ENCODE measurements at regions of chr10 and their contacts with region 1.

Region 1: DNA sequence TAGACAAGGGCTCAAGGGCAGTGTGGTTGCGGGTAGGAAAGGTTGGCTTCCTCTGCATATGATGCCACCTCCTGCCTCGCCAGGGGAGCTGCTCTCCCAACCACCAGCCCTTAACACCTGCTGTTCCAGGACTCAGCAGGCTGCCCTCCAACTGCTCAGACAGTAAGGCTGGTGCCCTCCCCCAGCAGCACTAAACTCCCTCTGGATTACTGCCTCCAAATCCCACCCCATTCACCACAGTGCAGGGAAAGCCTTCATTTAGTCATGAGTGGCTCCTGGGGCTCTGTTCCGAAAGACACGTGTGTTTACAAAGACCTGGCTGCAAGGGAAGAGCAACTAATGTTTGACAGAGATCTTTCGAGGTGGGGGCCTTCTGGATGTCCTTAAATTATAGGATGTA is 437.2 kb upstream of the MKI67 start:
- DNase-seq: no peak
- ATAC-seq: no peak
- H3K4me3 ChIP-seq: no peak overlapping the region
- H3K4me3 Mint-ChIP-seq: no peak overlapping the region
- H3K27ac ChIP-seq: no peak overlapping the region
- H3K27ac Mint-ChIP-seq: no peak overlapping the region
- H3K4me1 ChIP-seq: no peaks in the 10 kb centered on the region
- H3K4me1 Mint-ChIP-seq: no peaks in the 10 kb centered on the region
- H3K27me3 ChIP-seq: no peaks in the 10 kb centered on the region
- H3K27me3 Mint-ChIP-seq: no peaks in the 10 kb centered on the region
- CTCF ChIP-seq: no peak

Region 2: GRCh38 chr10:128419466-128420019 is 143.8 kb before region 1 on chr10:
- CTCF ChIA-PET with region 1: no interaction called
- POLR2A ChIA-PET with region 1: no interaction called
- intact Hi-C with region 1: loop called in 1 of 2 experiments (anchors 5 kb)
- DNase-seq: no peak
- ATAC-seq: no peak
- H3K4me3 ChIP-seq: no peak overlapping the region
- H3K4me3 Mint-ChIP-seq: no peak overlapping the region
- H3K27ac ChIP-seq: no peak overlapping the region
- H3K27ac Mint-ChIP-seq: no peak overlapping the region
- H3K4me1 ChIP-seq: no peaks in the 10 kb centered on the region
- H3K4me1 Mint-ChIP-seq: no peaks in the 10 kb centered on the region
- H3K27me3 ChIP-seq: no peaks in the 10 kb centered on the region
- H3K27me3 Mint-ChIP-seq: peaks cover 11% of the 10 kb centered on the region
- CTCF ChIP-seq: no peak

Measured in CD4-positive, alpha-beta T cell (primary cell).